ENCODE measurements at regions of chr14 and their contacts with region 1.

Region 1: GRCh38 chr14:35883677-35884293 is 57.6 kb downstream of the BRMS1L start:
- DNase-seq: peak in 41 of 42 donors; percentile 12 to 85 (median 61)

Region 2: GRCh38 chr14:36373982-36374673 is 490.3 kb after region 1 on chr14:
- intact Hi-C with region 1: loop called (anchors 10 kb)
- DNase-seq: peak; percentile 12 to 93 (median 78)

Measured in head of caudate nucleus (tissue), 42 donors.